Transverse colon (tissue), 4 donors: ENCODE measurements at regions of chr17 and their contacts with region 1.

Region 1: DNA sequence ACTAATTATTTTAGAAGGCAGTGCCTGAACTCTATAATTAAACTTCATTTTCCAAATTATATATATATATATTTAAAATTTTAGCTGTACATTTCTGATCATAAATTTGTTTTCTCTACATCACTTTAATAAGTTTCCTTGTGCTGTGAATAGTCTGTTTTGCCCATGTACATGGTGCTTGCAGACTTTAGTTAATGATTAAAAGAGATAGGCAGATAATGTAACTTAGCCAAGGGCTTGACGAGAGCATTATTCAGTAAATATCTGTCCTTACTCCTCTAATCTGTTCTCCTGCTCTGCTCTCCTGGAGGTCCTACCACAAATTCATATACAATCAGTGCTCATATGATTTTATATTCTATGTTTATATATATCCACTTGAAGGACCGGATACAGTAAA is 595.2 kb upstream of the KIF2B start:
- DNase-seq: no peak
- H3K4me3 ChIP-seq: no peak overlapping the region
- H3K27ac ChIP-seq: no peak overlapping the region
- H3K4me1 ChIP-seq: no peaks in the 10 kb centered on the region
- H3K27me3 ChIP-seq: no peaks in the 10 kb centered on the region
- CTCF ChIP-seq: no peak
- EP300 ChIP-seq: no peak
- POLR2A ChIP-seq: no peak

Region 2: DNA sequence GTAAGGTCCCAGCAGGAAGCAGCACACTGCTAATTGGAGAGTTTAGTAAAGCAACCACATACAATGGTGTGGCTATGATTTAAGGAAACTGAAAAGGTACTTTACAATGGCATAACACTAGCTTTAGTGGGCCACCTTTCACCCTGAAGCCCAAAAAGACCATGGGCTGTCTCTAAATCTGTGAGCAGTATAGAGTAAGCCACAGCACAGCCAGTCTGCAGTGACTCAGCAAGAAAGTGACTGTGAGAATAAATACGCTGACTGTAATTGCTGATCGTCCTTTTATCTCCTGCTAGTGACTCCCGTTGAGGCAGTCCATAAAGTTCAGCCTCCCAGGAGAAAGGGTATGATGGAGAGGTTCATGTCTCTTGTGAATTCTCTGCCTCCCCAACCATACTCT is 84.6 kb before region 1 on chr17:
- in situ Hi-C with region 1: loop called in 1 of 4 experiments (anchors 25 kb)
- intact Hi-C with region 1: no loop called
- DNase-seq: no peak
- H3K4me3 ChIP-seq: no peak overlapping the region
- H3K27ac ChIP-seq: no peak overlapping the region
- H3K4me1 ChIP-seq: no peaks in the 10 kb centered on the region
- H3K27me3 ChIP-seq: no peaks in the 10 kb centered on the region
- CTCF ChIP-seq: no peak
- EP300 ChIP-seq: no peak
- POLR2A ChIP-seq: no peak

Region 3: GRCh38 chr17:53176629-53177028 is 50.9 kb before region 1 on chr17:
- in situ Hi-C with region 1: no loop called
- intact Hi-C with region 1: no loop called
- DNase-seq: no peak
- H3K4me3 ChIP-seq: no peak overlapping the region
- H3K27ac ChIP-seq: no peak overlapping the region
- H3K4me1 ChIP-seq: no peaks in the 10 kb centered on the region
- H3K27me3 ChIP-seq: no peaks in the 10 kb centered on the region
- CTCF ChIP-seq: no peak
- EP300 ChIP-seq: no peak
- POLR2A ChIP-seq: no peak

Region 4: DNA sequence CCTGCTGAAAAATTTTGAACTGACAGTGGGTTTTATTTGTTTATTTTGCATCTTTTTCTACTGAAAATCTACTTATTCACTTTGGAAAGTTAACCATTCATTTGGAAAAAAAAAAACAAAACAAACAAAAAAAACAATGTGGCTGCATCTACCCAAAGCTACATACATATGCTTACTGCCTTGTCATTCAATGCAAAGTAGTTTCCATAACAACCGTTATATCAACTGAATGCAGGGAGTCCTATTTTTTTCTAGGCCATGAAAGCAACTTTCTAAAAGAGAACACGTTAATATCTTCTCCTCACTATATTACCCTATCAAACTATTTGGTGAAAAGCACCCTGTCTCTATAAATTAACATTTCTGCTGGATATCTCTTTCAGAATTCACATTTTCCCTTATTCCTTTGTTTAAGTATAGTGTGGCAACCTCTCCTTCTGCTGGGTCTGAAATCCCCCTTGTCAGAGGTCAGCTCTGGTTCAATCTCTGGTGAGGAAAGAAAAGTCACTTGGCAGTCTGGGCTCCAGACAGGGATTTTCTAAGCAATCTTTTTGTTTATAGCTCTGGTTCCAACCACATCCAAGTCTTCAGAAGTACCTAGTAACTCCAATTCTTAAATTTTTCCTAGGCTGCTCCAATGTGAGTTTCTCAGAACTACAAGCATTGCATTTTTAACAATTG is 1144.7 kb after region 1 on chr17:
- in situ Hi-C with region 1: no loop called
- intact Hi-C with region 1: no loop called
- DNase-seq: no peak
- H3K4me3 ChIP-seq: no peak overlapping the region
- H3K27ac ChIP-seq: no peak overlapping the region
- H3K4me1 ChIP-seq: no peaks in the 10 kb centered on the region
- H3K27me3 ChIP-seq: no peaks in the 10 kb centered on the region
- CTCF ChIP-seq: no peak
- EP300 ChIP-seq: no peak
- POLR2A ChIP-seq: no peak